Endothelial cell of umbilical vein (primary cell): ENCODE measurements at regions of chr15 and their contacts with region 1.

Region 1: DNA sequence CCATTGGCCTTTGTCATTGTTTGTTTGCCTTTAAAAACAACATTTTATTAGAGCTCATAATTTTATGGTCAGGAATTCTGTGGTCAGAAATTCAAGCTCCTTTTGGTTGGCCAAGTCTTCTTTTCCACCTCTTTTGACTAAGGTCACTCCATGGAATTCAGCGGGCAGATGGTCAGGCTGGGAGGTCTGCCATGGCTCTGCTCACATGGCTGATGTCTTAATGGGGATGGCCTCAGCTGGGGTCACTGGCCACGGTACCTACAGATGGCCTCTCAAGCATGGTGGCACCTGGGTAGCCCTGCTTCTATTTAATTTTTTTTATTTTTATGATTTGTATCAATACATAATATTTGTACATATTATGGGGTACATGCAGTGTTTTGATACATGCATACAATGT is 360.8 kb upstream of the MCTP2 start:
- DNase-seq: no peak
- H3K4me3 ChIP-seq: no peak overlapping the region
- H3K27ac ChIP-seq: no peak overlapping the region
- H3K4me1 ChIP-seq: no peaks in the 10 kb centered on the region
- H3K27me3 ChIP-seq: no peaks in the 10 kb centered on the region
- CTCF ChIP-seq: no peak
- POLR2A ChIP-seq: no peak

Region 2: GRCh38 chr15:93819826-93820225 is 50.8 kb before region 1 on chr15:
- CTCF ChIA-PET with region 1: no interaction called
- POLR2A ChIA-PET with region 1: no interaction called
- dilution Hi-C with region 1: no loop called
- intact Hi-C with region 1: loop called (anchors 10 kb)
- DNase-seq: no peak
- H3K4me3 ChIP-seq: no peak overlapping the region
- H3K27ac ChIP-seq: no peak overlapping the region
- H3K4me1 ChIP-seq: no peaks in the 10 kb centered on the region
- H3K27me3 ChIP-seq: no peaks in the 10 kb centered on the region
- CTCF ChIP-seq: no peak
- POLR2A ChIP-seq: no peak